PC-9 (cell line): ENCODE measurements at regions of chr19 and their contacts with region 1.

Region 1: DNA sequence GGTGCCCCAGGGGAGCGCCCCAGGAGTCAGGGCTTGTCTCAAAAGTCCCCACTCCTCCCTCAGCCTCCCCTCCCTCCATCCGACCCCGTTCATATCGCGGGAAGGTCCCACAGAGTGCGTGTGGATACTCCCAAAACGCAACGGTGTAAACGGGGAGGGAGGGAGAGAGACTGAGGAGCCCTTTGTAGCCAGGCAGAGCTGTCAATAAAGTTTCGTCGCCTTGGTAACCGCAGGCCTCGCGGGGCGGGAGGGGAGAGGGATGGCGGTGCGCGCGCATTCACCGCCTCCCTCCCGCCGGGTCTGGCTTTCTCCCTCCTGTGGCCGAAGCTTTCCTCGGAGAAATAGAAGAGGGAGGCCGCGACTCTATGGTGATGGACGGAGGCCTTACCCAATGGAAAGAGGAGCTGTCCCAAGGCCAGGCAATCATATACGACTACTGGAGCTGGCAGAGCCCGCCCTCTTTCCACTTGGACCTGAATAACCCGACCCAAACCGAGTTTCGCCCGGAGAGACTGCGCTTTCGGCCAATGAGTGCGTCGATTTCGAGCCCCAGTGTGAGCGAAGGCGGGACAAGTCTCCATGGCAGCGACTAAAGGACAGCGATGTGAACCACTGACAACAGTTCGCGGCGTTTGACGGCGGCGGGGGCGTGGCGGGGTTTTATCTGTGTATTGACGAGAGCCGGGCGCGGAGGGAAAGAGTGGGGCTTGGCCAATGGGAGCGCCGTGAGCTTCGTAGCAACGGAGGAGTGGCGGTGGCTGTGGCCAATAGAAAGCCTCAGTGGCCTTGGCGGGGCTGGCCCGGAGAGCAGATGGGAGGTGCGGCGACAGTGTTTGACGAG is at the start of gene KMT5C:
- DNase-seq: peak; percentile 100
- H3K4me3 ChIP-seq: peak within 1 kb of the TSS; percentile 86
- H3K27ac ChIP-seq: peak within 1 kb of the TSS; percentile 97
- H3K4me1 ChIP-seq: peaks cover 14% of the 10 kb centered on the region
- H3K27me3 ChIP-seq: no peaks in the 10 kb centered on the region
- CTCF ChIP-seq: no peak
- total RNA-seq, gene KMT5C: 71.6 and 80.7 TPM in 2 replicates

Region 2: GRCh38 chr19:54463531-54464043 is 875.7 kb before region 1 on chr19 and contains the start of gene LENG9:
- CTCF ChIA-PET with region 1: no interaction called
- POLR2A ChIA-PET with region 1: no interaction called
- intact Hi-C with region 1: loop called (anchors 2 kb)
- DNase-seq: peak; percentile 97 to 99
- H3K4me3 ChIP-seq: peak within 1 kb of the TSS; percentile 77
- H3K27ac ChIP-seq: peak within 1 kb of the TSS; percentile 89
- H3K4me1 ChIP-seq: peaks cover 18% of the 10 kb centered on the region
- H3K27me3 ChIP-seq: no peaks in the 10 kb centered on the region
- CTCF ChIP-seq: no peak
- total RNA-seq, gene LENG9: 7.0 and 8.9 TPM in 2 replicates

Region 3: DNA sequence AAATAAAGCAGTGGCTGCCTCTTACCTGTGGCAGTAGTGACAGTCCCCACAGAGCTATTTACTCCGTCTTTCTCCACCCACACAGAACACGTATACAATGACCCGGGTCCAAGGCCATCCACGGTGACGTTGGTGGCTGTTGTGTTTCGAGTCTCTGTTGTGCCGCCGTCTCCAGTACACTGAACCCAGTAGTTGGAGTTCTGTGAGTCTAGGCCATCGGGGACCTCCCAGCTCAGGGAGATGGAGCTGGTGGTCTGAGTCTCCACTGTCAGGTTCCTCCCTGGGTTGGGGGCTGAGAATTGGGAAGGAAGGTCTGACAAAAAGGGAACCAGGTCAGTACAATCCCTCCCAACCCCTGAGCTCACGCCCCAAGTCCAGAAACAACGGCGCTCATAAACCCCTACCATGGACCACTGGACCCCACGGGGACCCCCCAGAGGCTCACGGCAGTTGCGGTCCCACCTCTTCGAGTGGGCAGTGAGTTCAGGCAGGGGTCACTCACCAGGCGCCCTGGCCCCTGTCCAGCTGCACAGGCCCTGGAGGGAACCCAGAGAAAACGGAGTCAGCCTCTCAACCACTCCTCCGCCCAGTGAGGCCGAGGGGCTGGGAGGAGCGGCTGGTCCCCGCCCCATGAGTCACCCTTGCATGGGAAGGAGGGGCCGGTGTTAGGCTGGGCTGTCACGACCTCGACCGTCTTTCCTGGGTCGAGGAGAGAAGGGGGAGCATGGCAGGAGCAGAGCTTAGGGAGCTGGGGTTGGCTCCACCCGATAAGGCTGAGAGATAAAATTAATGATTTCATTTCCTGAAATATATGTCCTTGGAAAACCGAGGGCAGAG is 132.4 kb before region 1 on chr19:
- CTCF ChIA-PET with region 1: no interaction called
- POLR2A ChIA-PET with region 1: interaction called, 27 read pairs
- intact Hi-C with region 1: no loop called
- DNase-seq: peak; percentile 89 to 95
- H3K4me3 ChIP-seq: peak overlapping the region; percentile 24; the same call in 1 of the 2 replicates
- H3K27ac ChIP-seq: peak overlapping the region; percentile 80
- H3K4me1 ChIP-seq: peaks cover 40% of the 10 kb centered on the region
- H3K27me3 ChIP-seq: no peaks in the 10 kb centered on the region
- CTCF ChIP-seq: no peak

Region 4: DNA sequence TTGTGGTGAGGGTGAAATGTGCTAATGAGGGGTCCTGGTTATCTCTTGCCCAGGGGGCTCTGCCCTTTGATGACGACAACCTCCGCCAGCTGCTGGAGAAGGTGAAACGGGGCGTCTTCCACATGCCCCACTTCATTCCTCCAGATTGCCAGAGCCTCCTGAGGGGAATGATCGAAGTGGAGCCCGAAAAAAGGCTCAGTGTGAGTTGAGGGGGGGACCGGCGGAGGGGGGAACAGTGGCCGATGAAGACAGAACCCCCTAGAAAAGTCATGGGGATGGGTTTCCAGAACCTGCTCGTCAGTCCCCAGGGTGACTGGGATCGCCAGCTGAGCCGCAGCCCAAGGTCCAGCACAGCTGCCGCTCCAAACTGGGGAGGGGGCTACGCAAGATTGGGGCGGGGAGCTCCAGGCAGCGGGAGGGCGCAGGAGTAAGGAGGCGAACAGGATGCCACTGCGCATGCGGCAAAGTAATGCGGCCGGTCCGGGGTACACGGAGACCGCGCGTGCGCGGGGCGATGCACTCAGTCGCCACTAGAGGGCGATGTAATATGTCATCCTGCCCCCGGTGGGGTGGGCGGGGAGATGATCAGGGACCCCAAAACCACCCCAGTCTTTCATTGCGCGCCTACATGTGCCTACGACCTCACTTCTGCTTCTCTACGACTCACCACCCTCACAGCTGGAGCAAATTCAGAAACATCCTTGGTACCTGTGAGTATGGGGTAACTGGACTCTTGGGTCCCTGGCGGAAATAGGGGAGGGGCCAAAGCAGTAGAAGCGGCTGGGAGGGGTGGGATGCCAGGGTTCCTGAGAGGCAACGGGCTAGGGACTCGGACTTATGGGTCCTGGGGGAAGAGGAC is 37.6 kb before region 1 on chr19:
- CTCF ChIA-PET with region 1: interaction called, 8 read pairs
- POLR2A ChIA-PET with region 1: interaction called, 5 read pairs
- intact Hi-C with region 1: loop called (anchors 1 kb)
- DNase-seq: peak; percentile 49 to 94
- H3K4me3 ChIP-seq: peak overlapping the region; percentile 55
- H3K27ac ChIP-seq: no peak overlapping the region
- H3K4me1 ChIP-seq: 0 out of 2 replicates have a peak, but pooled peaks cover 4% of the 10 kb centered on the region
- H3K27me3 ChIP-seq: no peaks in the 10 kb centered on the region
- CTCF ChIP-seq: peak; percentile 100

Region 5: GRCh38 chr19:55353803-55354697 is 14.8 kb after region 1 on chr19:
- CTCF ChIA-PET with region 1: interaction called, 5 read pairs
- POLR2A ChIA-PET with region 1: interaction called, 23 read pairs
- intact Hi-C with region 1: loop called (anchors 1 kb)
- DNase-seq: peak; percentile 52 to 85
- H3K4me3 ChIP-seq: peak overlapping the region; percentile 72
- H3K27ac ChIP-seq: no peak overlapping the region
- H3K4me1 ChIP-seq: peaks cover 47% of the 10 kb centered on the region
- H3K27me3 ChIP-seq: peaks cover 5% of the 10 kb centered on the region
- CTCF ChIP-seq: no peak

Region 6: GRCh38 chr19:55385740-55386529 is 46.7 kb after region 1 on chr19 and contains the start of gene RPL28:
- CTCF ChIA-PET with region 1: interaction called, 12 read pairs
- POLR2A ChIA-PET with region 1: interaction called, 58 read pairs
- intact Hi-C with region 1: loop called (anchors 1 kb)
- DNase-seq: peak; percentile 98 to 100
- H3K4me3 ChIP-seq: peak within 1 kb of the TSS; percentile 88
- H3K27ac ChIP-seq: peak within 1 kb of the TSS; percentile 83
- H3K4me1 ChIP-seq: peaks cover 39% of the 10 kb centered on the region
- H3K27me3 ChIP-seq: no peaks in the 10 kb centered on the region
- CTCF ChIP-seq: no peak
- total RNA-seq, gene RPL28: 2,433 and 2,547 TPM in 2 replicates

Region 7: GRCh38 chr19:55447421-55448174 is 108.3 kb after region 1 on chr19:
- CTCF ChIA-PET with region 1: no interaction called
- POLR2A ChIA-PET with region 1: interaction called, 11 read pairs
- intact Hi-C with region 1: no loop called
- DNase-seq: peak; percentile 61 to 68
- H3K4me3 ChIP-seq: no peak overlapping the region
- H3K27ac ChIP-seq: no peak overlapping the region
- H3K4me1 ChIP-seq: no peaks in the 10 kb centered on the region
- H3K27me3 ChIP-seq: peaks cover 38% of the 10 kb centered on the region
- CTCF ChIP-seq: no peak